Activated CD4-positive, alpha-beta T cell treated with anti-CD3 and anti-CD28 coated beads, Interleukin-2, amount 10 ng/mL, durations not matched to agents 24 days and 14 days (primary cell): ENCODE measurements at regions of chr3 and their contacts with region 1.

Region 1: GRCh38 chr3:172666873-172667694 is 43.8 kb downstream of the NCEH1 start:
- DNase-seq: peak; percentile 95
- H3K4me3 Mint-ChIP-seq: no peak overlapping the region
- H3K27ac Mint-ChIP-seq: no peak overlapping the region
- H3K4me1 Mint-ChIP-seq: peaks cover 16% of the 10 kb centered on the region
- H3K27me3 Mint-ChIP-seq: peaks cover 5% of the 10 kb centered on the region

Region 2: DNA sequence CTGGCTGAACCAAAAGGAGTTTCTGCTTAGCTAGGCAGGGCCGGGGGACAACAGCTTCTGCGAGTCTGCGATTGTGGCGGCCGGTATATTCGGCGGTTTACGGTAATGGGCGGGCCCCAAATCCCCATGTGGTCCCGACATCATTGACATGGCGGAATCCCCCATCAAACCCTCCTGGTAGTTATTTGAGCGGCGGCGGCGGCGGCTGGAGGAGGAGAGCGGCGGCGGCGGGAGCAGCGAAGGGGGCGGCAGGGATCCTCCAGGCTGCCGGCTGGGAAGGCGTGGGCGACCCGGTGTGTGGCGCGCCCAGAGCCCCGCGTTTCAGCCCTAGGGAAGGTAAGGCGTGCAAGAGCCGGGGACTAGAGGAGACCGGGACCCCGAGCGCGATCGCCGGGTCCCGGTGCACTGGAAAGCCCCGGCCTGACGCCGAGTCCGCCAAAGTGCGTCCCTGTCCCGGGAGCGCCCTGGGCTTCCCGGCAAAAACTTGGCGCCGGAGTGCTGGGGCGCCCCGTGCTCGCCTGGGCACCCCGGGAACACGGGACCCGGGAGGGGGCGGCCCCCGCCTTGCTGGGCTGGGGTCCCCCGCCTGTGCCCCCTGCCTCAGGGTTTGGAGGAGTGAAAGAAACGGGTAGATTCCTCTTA is 627.5 kb before region 1 on chr3 and contains the start of gene FNDC3B:
- intact Hi-C with region 1: loop called (anchors 2 kb)
- DNase-seq: peak; percentile 98
- H3K4me3 Mint-ChIP-seq: peak within 1 kb of the TSS; percentile 87
- H3K27ac Mint-ChIP-seq: peak within 1 kb of the TSS; percentile 95
- H3K4me1 Mint-ChIP-seq: peaks cover 17% of the 10 kb centered on the region
- H3K27me3 Mint-ChIP-seq: peaks cover 3% of the 10 kb centered on the region
- total RNA-seq, gene FNDC3B: 19.6 and 19.9 TPM in 2 replicates

Region 3: GRCh38 chr3:172332256-172333041 is 334.6 kb before region 1 on chr3:
- intact Hi-C with region 1: loop called (anchors 1 kb)
- DNase-seq: peak; percentile 88
- H3K4me3 Mint-ChIP-seq: no peak overlapping the region
- H3K27ac Mint-ChIP-seq: no peak overlapping the region
- H3K4me1 Mint-ChIP-seq: peaks cover 6% of the 10 kb centered on the region
- H3K27me3 Mint-ChIP-seq: no peaks in the 10 kb centered on the region

Region 4: GRCh38 chr3:172476347-172476746 is 190.7 kb before region 1 on chr3:
- intact Hi-C with region 1: loop called (anchors 5 kb)
- DNase-seq: no peak
- H3K4me3 Mint-ChIP-seq: peak overlapping the region; percentile 87
- H3K27ac Mint-ChIP-seq: no peak overlapping the region
- H3K4me1 Mint-ChIP-seq: peaks cover 17% of the 10 kb centered on the region
- H3K27me3 Mint-ChIP-seq: peaks cover 9% of the 10 kb centered on the region

Region 5: GRCh38 chr3:172685346-172686214 is 18.5 kb after region 1 on chr3:
- intact Hi-C with region 1: no loop called
- DNase-seq: no peak
- H3K4me3 Mint-ChIP-seq: peak overlapping the region; percentile 43
- H3K27ac Mint-ChIP-seq: peak overlapping the region; percentile 86
- H3K4me1 Mint-ChIP-seq: peaks cover 12% of the 10 kb centered on the region
- H3K27me3 Mint-ChIP-seq: no peaks in the 10 kb centered on the region

Region 6: GRCh38 chr3:173814809-173815208 is 1147.7 kb after region 1 on chr3:
- intact Hi-C with region 1: no loop called
- DNase-seq: no peak
- H3K4me3 Mint-ChIP-seq: no peak overlapping the region
- H3K27ac Mint-ChIP-seq: no peak overlapping the region
- H3K4me1 Mint-ChIP-seq: no peaks in the 10 kb centered on the region
- H3K27me3 Mint-ChIP-seq: no peaks in the 10 kb centered on the region